A673 (cell line): ENCODE measurements at regions of chr9 and their contacts with region 1.

Region 1: DNA sequence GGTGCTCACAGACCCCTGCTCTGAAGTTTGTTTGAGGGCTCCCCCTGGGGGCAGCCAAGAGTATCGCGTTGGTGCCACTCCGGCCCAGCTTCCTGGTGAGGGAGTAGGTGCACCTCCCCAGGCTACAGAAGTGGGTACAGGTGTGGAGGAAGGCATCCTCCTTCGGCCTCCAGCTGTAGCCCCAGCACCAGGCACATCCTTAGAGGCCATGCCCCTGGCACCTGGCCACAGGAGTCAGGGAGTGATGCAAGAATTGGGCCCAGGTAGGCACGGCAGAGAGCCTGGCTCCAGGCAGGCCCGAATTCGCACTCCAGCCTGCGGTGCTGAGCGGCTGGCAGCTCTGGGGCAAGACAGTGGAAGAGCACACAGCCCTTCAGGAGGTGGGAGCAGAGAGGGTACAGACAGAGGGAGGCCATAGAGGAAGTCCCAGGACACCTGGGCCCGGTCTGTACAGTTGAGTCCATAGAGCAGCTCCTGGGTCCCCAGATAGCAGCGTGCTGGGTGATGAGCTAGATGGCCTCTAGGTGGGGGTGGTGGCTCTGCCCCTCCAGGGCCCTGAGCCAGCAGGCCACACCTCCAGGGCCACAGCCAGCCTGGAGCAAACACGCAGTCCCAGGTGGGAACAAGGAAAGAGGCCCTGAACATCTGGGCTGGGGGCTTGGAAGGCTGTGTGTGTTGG is 2.4 kb downstream of the SAPCD2 start:
- DNase-seq: peak; percentile 88
- H3K4me3 ChIP-seq: peak overlapping the region; percentile 61
- H3K27ac ChIP-seq: no peak overlapping the region
- H3K4me1 ChIP-seq: peaks cover 15% of the 10 kb centered on the region
- H3K27me3 ChIP-seq: no peaks in the 10 kb centered on the region
- CTCF ChIP-seq: peak; percentile 77

Region 2: DNA sequence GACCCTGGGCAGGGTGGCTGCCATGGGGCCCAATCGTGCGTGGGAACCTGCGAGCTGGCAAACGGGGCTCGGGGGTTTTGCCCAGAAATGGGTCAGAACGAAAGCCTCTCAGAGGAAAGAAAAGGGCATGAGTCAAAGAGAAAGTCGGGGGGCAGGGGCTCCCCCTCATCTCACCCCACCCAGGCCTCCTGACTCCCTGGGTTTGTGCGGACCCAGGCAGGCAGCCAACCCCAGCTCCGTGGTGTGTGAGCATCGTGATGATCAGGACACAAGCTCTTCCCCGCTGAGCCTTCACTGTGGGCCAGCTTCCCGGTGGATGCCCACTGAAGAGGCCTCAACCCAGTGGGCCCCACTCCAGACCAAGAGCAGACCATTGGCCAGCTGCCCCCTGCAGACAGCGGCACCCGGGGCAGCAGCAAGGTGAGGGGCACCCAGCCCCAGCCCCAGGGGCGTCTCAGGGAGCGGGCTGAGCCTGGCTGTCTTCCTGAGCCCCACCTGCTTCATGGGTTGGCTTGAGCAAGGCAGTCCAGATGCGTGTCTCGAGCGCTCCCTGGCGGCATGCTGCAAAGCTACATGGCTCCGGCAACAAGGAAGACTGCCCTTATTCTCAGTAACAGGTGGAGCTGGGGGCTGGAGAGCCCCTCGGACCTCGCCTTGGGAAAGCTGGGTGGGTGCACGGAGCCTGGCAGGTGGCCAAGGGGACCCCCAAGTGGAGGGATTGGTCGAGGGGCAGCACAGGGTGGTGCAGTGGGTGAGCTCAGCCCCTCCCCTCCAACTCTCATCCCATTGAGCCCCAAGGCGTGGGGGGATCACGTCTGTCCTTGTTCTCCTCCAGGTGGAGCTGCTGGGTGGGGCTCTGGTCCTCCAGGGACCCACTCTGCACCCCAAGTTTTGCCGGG is 32.9 kb before region 1 on chr9:
- CTCF ChIA-PET with region 1: interaction called, 11 read pairs
- POLR2A ChIA-PET with region 1: no interaction called
- intact Hi-C with region 1: no loop called
- DNase-seq: peak; percentile 89
- H3K4me3 ChIP-seq: peak overlapping the region; percentile 22
- H3K27ac ChIP-seq: no peak overlapping the region
- H3K4me1 ChIP-seq: peaks cover 9% of the 10 kb centered on the region
- H3K27me3 ChIP-seq: no peaks in the 10 kb centered on the region
- CTCF ChIP-seq: peak; percentile 96

Region 3: DNA sequence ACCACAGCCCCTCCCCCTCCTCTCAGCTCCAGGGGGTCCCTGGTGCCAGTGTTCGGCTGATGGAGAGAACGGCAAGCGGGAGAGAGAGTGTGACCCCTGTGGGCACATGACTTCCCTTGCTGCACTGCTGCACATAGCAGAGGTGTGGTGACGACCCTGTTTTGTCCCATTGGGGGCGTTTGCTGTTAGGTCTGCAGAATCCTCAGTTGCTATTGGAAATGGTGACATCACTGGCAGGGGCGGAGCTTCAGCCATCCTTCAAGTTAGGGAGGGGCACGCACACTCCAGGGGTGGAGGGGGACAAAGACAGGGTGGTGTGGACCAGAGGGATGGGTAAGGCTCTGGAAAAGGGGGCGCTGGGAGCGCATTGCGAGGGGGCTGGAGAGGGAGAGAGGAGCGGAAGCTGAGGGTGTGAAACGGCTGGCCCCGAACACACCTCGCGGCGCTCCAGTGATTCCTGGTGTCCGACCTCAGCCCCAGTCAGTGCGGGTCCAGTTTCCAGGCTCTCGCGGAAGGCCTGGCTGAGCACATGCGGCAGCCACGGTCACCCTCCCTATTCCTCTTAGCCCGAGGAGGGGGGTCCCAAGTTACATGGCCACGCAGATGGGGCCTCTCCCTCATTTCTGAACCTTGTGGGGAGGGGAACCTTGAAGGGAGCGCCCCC is 70.2 kb after region 1 on chr9:
- CTCF ChIA-PET with region 1: no interaction called
- POLR2A ChIA-PET with region 1: no interaction called
- intact Hi-C with region 1: no loop called
- DNase-seq: peak; percentile 57
- H3K4me3 ChIP-seq: no peak overlapping the region
- H3K27ac ChIP-seq: no peak overlapping the region
- H3K4me1 ChIP-seq: no peaks in the 10 kb centered on the region
- H3K27me3 ChIP-seq: peaks cover 92% of the 10 kb centered on the region
- CTCF ChIP-seq: no peak

Region 4: GRCh38 chr9:137150617-137151457 is 82.8 kb after region 1 on chr9:
- CTCF ChIA-PET with region 1: interaction called, 10 read pairs
- POLR2A ChIA-PET with region 1: no interaction called
- intact Hi-C with region 1: no loop called
- DNase-seq: peak; percentile 76
- H3K4me3 ChIP-seq: no peak overlapping the region
- H3K27ac ChIP-seq: no peak overlapping the region
- H3K4me1 ChIP-seq: peaks cover 5% of the 10 kb centered on the region
- H3K27me3 ChIP-seq: peaks cover 3% of the 10 kb centered on the region
- CTCF ChIP-seq: no peak

Region 5: GRCh38 chr9:137162505-137163100 is 94.6 kb after region 1 on chr9:
- CTCF ChIA-PET with region 1: interaction called, 10 read pairs
- POLR2A ChIA-PET with region 1: no interaction called
- intact Hi-C with region 1: no loop called
- DNase-seq: no peak
- H3K4me3 ChIP-seq: peak overlapping the region; percentile 36
- H3K27ac ChIP-seq: no peak overlapping the region
- H3K4me1 ChIP-seq: peaks cover 16% of the 10 kb centered on the region
- H3K27me3 ChIP-seq: peaks cover 87% of the 10 kb centered on the region
- CTCF ChIP-seq: 0 out of 2 replicates have a peak, but pooled peaks have one; percentile 14